Natural killer cell (primary cell): ENCODE measurements at regions of chr4 and their contacts with region 1.

Region 1: DNA sequence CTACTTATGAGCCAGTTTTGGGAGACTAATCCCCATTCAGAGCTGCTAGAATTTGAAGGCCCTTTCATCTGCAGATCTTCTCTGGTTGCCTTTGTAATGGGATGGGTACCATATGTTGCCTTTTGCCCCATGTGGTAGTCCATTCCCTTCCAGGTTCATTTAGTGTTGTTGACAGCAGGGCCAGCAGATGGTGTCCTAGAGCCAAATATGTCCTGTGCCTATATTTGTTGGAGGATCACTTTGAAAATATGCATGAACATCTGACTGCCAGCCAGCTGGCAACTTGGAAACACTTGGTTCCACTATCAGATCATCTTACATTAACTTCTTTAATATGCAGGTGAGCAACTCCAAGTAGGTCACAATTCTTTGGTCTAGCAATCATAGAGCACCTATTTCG is 30.4 kb downstream of the CFAP299 start:
- DNase-seq: peak; percentile 42 to 78
- ATAC-seq: peak; percentile 70 to 88 (median 86)
- H3K4me3 ChIP-seq: no peak overlapping the region
- H3K4me3 Mint-ChIP-seq: no peak overlapping the region
- H3K27ac ChIP-seq: no peak overlapping the region
- H3K27ac Mint-ChIP-seq: no peak overlapping the region
- H3K4me1 ChIP-seq: peaks cover 3% of the 10 kb centered on the region
- H3K4me1 Mint-ChIP-seq: peaks cover 4 to 17% of the 10 kb centered on the region in 2 donors
- H3K27me3 ChIP-seq: peaks cover 2% of the 10 kb centered on the region
- H3K27me3 Mint-ChIP-seq: peaks cover 0 to 5% of the 10 kb centered on the region in 2 donors
- CTCF ChIP-seq: peak; percentile 71

Region 2: GRCh38 chr4:80989921-80990544 is 624.1 kb after region 1 on chr4:
- intact Hi-C with region 1: loop called (anchors 1 kb)
- DNase-seq: peak in 1 of 2 donors; percentile 72
- ATAC-seq: peak in 2 of 3 donors; percentile 34 to 51
- H3K4me3 ChIP-seq: no peak overlapping the region
- H3K4me3 Mint-ChIP-seq: no peak overlapping the region
- H3K27ac ChIP-seq: no peak overlapping the region
- H3K27ac Mint-ChIP-seq: no peak overlapping the region
- H3K4me1 ChIP-seq: no peaks in the 10 kb centered on the region
- H3K4me1 Mint-ChIP-seq: peaks cover 5 to 7% of the 10 kb centered on the region in 2 donors
- H3K27me3 ChIP-seq: no peaks in the 10 kb centered on the region
- H3K27me3 Mint-ChIP-seq: peaks cover 0 to 5% of the 10 kb centered on the region in 2 donors
- CTCF ChIP-seq: peak; percentile 78

Region 3: DNA sequence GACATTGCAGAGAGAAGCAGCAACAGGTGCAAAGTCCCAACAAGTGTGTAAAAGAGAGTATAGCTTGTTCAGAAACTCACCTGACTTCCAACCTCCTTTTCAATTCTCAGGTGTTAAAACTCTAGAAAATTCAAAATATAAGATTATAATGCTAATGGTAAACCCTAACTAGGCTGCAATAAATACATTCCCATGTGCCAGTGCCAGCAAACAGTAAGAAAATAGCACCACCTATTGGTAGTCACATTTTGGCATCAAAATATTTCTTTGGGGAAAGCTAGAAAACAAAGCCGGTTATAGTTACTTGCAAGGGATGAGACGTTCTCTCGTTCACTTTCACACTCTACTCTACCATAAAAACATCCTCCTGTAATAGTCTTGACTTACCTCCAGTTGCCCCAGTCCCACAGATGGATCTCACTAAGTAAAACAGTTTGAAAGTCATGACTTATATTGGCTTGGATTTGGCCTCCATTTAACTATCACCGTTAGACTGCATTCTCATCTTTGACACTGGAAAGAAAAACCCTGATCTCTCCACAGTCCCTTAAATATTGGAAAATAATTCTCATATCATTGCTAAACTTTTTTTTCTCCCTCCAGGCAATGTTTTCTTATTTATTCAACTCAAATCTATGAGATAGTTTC is 674.2 kb after region 1 on chr4:
- intact Hi-C with region 1: loop called (anchors 1 kb)
- DNase-seq: peak in 1 of 2 donors; percentile 65
- ATAC-seq: peak in 1 of 3 donors; percentile 54
- H3K4me3 ChIP-seq: no peak overlapping the region
- H3K4me3 Mint-ChIP-seq: no peak overlapping the region
- H3K27ac ChIP-seq: no peak overlapping the region
- H3K27ac Mint-ChIP-seq: no peak overlapping the region
- H3K4me1 ChIP-seq: no peaks in the 10 kb centered on the region
- H3K4me1 Mint-ChIP-seq: no peaks in the 10 kb centered on the region
- H3K27me3 ChIP-seq: peaks cover 2% of the 10 kb centered on the region
- H3K27me3 Mint-ChIP-seq: peaks cover 8 to 26% of the 10 kb centered on the region in 2 donors
- CTCF ChIP-seq: peak; percentile 70

Region 4: GRCh38 chr4:81351654-81352445 is 985.9 kb after region 1 on chr4:
- intact Hi-C with region 1: loop called (anchors 2 kb)
- DNase-seq: peak; percentile 40 to 77
- ATAC-seq: peak; percentile 50 to 77 (median 70)
- H3K4me3 ChIP-seq: no peak overlapping the region
- H3K4me3 Mint-ChIP-seq: no peak overlapping the region
- H3K27ac ChIP-seq: no peak overlapping the region
- H3K27ac Mint-ChIP-seq: no peak overlapping the region
- H3K4me1 ChIP-seq: no peaks in the 10 kb centered on the region
- H3K4me1 Mint-ChIP-seq: peaks cover 5 to 7% of the 10 kb centered on the region in 2 donors
- H3K27me3 ChIP-seq: no peaks in the 10 kb centered on the region
- H3K27me3 Mint-ChIP-seq: peaks cover 6 to 15% of the 10 kb centered on the region in 2 donors
- CTCF ChIP-seq: peak; percentile 90